ENCODE measurements at regions of chr16 and their contacts with region 1.

Region 1: GRCh38 chr16:24609740-24610415 is 70.5 kb downstream of the RBBP6 start:
- DNase-seq: peak; percentile 93
- H3K4me3 ChIP-seq: peak overlapping the region; percentile 49
- H3K27ac ChIP-seq: peak overlapping the region; percentile 18
- H3K4me1 ChIP-seq: peaks cover 4% of the 10 kb centered on the region
- H3K27me3 ChIP-seq: no peaks in the 10 kb centered on the region
- CTCF ChIP-seq: no peak

Region 2: DNA sequence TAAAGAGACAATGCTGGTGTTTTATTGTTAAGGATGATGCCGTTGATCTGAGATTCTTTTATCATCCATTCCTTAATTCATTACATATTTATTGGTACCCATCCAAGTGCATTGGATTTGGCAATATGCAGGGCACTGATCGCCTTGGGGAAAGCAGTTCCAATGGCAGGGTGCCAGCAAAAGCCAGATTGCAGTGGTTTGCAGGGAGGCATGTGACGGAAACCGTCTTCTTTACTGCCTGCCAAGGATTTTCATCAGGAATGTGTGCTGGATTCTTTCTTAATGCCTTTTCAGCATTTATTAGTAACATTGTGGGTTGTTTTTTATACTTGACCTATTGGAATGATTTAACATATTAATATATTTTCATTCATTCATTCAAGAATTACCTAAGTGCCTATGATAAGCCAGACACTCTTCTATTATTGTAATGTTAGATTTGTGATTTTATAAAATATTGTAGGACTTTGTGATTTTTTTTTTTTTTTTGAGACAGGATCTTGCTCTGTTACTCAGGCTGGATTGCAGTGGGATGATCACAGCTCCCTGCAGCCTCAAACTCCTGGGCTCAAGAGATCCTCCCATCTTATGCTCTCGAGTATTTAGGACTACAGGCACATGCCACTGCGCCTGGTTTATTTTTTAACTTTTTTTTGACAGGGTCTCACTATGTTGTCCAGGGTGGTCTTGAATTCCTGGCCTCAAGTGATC is 26.2 kb after region 1 on chr16:
- CTCF ChIA-PET with region 1: no interaction called
- POLR2A ChIA-PET with region 1: interaction called, 18 read pairs
- intact Hi-C with region 1: no loop called
- DNase-seq: peak; percentile 92
- H3K4me3 ChIP-seq: no peak overlapping the region
- H3K27ac ChIP-seq: peak overlapping the region; percentile 73
- H3K4me1 ChIP-seq: peaks cover 13% of the 10 kb centered on the region
- H3K27me3 ChIP-seq: no peaks in the 10 kb centered on the region
- CTCF ChIP-seq: no peak